ENCODE measurements at regions of chr1 and their contacts with region 1.

Region 1: GRCh38 chr1:201481761-201482493 is 12.9 kb upstream of the PHLDA3 start:
- DNase-seq: peak; percentile 41
- ATAC-seq: peak; percentile 90
- H3K4me3 ChIP-seq: no peak overlapping the region; the same call in 1 of the 2 replicates
- H3K27ac ChIP-seq: peak overlapping the region; percentile 78
- H3K4me1 ChIP-seq: peaks cover 41% of the 10 kb centered on the region
- H3K27me3 ChIP-seq: no peaks in the 10 kb centered on the region
- CTCF ChIP-seq: peak; percentile 91 to 97 (median 93)
- EP300 ChIP-seq: no peak
- POLR2A ChIP-seq: no peak
- RAD21 ChIP-seq: peak; percentile 90

Region 2: DNA sequence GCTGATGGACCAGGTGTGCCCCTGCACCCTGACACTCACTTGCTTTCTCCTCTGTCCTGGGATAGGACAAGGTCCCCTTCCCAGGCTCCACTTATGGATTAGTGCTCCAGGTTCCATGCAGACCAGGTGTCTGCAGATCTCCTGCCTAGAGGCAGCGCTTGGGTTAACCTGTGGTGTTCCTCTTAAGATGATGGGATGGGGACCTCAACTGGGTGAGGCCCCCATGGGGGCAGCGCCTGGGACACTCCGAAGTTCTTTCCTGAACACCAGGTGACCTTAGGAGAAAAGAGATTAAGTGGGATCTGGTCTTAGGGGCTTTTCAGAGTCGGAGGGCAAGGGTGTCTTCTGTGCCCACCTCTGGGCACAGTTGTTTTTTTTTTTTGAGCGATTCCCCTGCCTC is 125.7 kb before region 1 on chr1:
- CTCF ChIA-PET with region 1: no interaction called
- POLR2A ChIA-PET with region 1: no interaction called
- RAD21 ChIA-PET with region 1: no interaction called
- SMC1A ChIA-PET with region 1: no interaction called
- in situ Hi-C with region 1: no loop called
- intact Hi-C with region 1: no loop called
- DNase-seq: no peak
- ATAC-seq: no peak
- H3K4me3 ChIP-seq: no peak overlapping the region
- H3K27ac ChIP-seq: no peak overlapping the region
- H3K4me1 ChIP-seq: no peaks in the 10 kb centered on the region
- H3K27me3 ChIP-seq: peaks cover 0 to 4% of the 10 kb centered on the region in 2 experiments; a peak in 2 of 4 replicates
- CTCF ChIP-seq: no peak
- EP300 ChIP-seq: no peak
- POLR2A ChIP-seq: no peak
- RAD21 ChIP-seq: no peak

Region 3: DNA sequence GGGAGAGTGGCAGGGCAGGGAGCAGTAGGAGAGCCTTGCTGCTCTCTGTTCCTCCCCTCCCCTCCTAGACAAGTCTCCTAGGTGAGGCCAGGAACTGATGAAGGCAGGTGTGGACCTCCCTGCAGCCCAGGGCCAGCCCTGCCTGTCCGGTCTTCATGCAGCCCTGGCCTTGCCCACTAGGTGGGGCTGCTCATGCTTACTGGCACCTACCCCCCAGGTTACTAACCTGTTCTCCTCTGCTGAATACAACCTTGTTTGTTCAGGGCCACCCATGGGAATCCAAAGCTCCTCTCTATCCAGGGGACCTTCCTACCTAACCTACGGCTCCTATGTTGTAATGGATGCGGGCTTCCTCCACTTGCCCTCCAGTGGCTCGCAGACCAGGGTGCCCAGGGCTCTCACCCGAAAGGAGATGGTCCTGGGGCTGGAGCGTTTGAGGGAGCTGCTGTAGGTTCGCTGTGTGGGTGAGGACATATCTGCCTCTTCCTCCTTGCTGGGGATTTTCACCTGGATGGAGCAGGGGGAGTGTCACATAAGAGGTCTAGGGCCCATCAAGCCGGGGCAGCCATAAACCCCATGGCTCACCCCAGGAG is 96.5 kb before region 1 on chr1:
- CTCF ChIA-PET with region 1: interaction called, 22 read pairs
- POLR2A ChIA-PET with region 1: no interaction called
- RAD21 ChIA-PET with region 1: interaction called, 12 read pairs
- SMC1A ChIA-PET with region 1: interaction called, 8 read pairs
- in situ Hi-C with region 1: no loop called
- intact Hi-C with region 1: no loop called
- DNase-seq: no peak
- ATAC-seq: peak; percentile 99
- H3K4me3 ChIP-seq: no peak overlapping the region
- H3K27ac ChIP-seq: no peak overlapping the region
- H3K4me1 ChIP-seq: no peaks in the 10 kb centered on the region
- H3K27me3 ChIP-seq: no peaks in the 10 kb centered on the region; a peak in 1 of 4 replicates
- CTCF ChIP-seq: peak; percentile 93 to 97 (median 96); a peak in 5 of 6 replicates
- EP300 ChIP-seq: no peak
- POLR2A ChIP-seq: no peak
- RAD21 ChIP-seq: peak; percentile 78

Region 4: GRCh38 chr1:201426479-201427310 is 55.2 kb before region 1 on chr1:
- CTCF ChIA-PET with region 1: interaction called, 30 read pairs
- POLR2A ChIA-PET with region 1: no interaction called
- RAD21 ChIA-PET with region 1: interaction called, 3 read pairs
- SMC1A ChIA-PET with region 1: no interaction called
- in situ Hi-C with region 1: no loop called
- intact Hi-C with region 1: no loop called
- DNase-seq: no peak
- ATAC-seq: peak; percentile 69
- H3K4me3 ChIP-seq: no peak overlapping the region
- H3K27ac ChIP-seq: no peak overlapping the region
- H3K4me1 ChIP-seq: peaks cover 3% of the 10 kb centered on the region
- H3K27me3 ChIP-seq: no peaks in the 10 kb centered on the region
- CTCF ChIP-seq: no peak
- EP300 ChIP-seq: peak; percentile 13 to 30; a peak in 1 of 4 replicates
- POLR2A ChIP-seq: no peak
- RAD21 ChIP-seq: no peak

Region 5: GRCh38 chr1:201456499-201457309 is 25.2 kb before region 1 on chr1:
- CTCF ChIA-PET with region 1: interaction called, 455 read pairs
- POLR2A ChIA-PET with region 1: interaction called, 59 read pairs
- RAD21 ChIA-PET with region 1: interaction called, 301 read pairs
- SMC1A ChIA-PET with region 1: interaction called, 182 read pairs
- in situ Hi-C with region 1: no loop called
- intact Hi-C with region 1: no loop called
- DNase-seq: no peak
- ATAC-seq: peak; percentile 54
- H3K4me3 ChIP-seq: 0 out of 2 replicates have a peak overlapping the region, but pooled peaks have one; percentile 14
- H3K27ac ChIP-seq: no peak overlapping the region; the same call in 1 of the 2 replicates
- H3K4me1 ChIP-seq: peaks cover 31% of the 10 kb centered on the region
- H3K27me3 ChIP-seq: no peaks in the 10 kb centered on the region
- CTCF ChIP-seq: no peak
- EP300 ChIP-seq: no peak
- POLR2A ChIP-seq: no peak
- RAD21 ChIP-seq: no peak

Region 6: GRCh38 chr1:201506556-201507359 is 24.8 kb after region 1 on chr1 and contains the start of gene CSRP1:
- CTCF ChIA-PET with region 1: interaction called, 814 read pairs
- POLR2A ChIA-PET with region 1: interaction called, 68 read pairs
- RAD21 ChIA-PET with region 1: interaction called, 505 read pairs
- SMC1A ChIA-PET with region 1: interaction called, 514 read pairs
- in situ Hi-C with region 1: no loop called
- intact Hi-C with region 1: no loop called
- DNase-seq: peak; percentile 39
- ATAC-seq: peak; percentile 91
- H3K4me3 ChIP-seq: peak within 1 kb of the TSS; percentile 95
- H3K27ac ChIP-seq: peak within 1 kb of the TSS; percentile 83
- H3K4me1 ChIP-seq: peaks cover 37% of the 10 kb centered on the region
- H3K27me3 ChIP-seq: no peaks in the 10 kb centered on the region
- CTCF ChIP-seq: peak in 1 of 3 experiments; percentile 21; a peak in 1 of 6 replicates
- EP300 ChIP-seq: no peak
- POLR2A ChIP-seq: peak; percentile 96
- RAD21 ChIP-seq: no peak
- polyA plus RNA-seq, gene CSRP1: 23.4 to 24.3 TPM

Region 7: DNA sequence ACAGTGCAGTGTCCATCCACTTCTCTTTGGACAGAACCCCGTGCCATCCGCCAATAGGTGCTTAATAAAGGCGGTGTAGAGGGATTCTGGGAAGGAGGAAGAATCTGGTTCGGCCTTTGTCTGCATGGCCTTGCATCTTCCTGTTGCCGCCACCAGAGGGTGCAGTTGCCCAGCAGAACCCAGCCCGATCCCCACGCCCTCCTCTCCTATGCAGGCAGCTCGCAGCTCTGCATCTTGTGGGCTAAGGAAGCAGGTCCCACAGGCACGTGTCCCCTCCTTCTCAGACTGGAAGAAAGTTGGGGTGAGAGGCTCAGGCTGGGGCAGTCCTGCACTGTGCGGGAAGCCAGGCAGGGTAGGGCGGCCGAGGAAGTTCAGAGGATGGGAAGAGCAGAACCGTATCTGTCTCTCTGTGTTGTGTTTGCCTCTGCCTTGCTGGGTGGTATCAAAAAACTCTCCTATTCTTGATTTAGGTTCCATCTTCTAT is 77.8 kb after region 1 on chr1:
- CTCF ChIA-PET with region 1: interaction called, 26 read pairs
- POLR2A ChIA-PET with region 1: no interaction called
- RAD21 ChIA-PET with region 1: interaction called, 3 read pairs
- SMC1A ChIA-PET with region 1: no interaction called
- in situ Hi-C with region 1: no loop called
- intact Hi-C with region 1: no loop called
- DNase-seq: peak; percentile 9
- ATAC-seq: peak; percentile 99
- H3K4me3 ChIP-seq: no peak overlapping the region
- H3K27ac ChIP-seq: no peak overlapping the region
- H3K4me1 ChIP-seq: no peaks in the 10 kb centered on the region
- H3K27me3 ChIP-seq: peaks cover 0 to 1% of the 10 kb centered on the region in 2 experiments; a peak in 2 of 4 replicates
- CTCF ChIP-seq: peak; percentile 94 to 96 (median 96)
- EP300 ChIP-seq: no peak
- POLR2A ChIP-seq: no peak
- RAD21 ChIP-seq: peak; percentile 92

Region 8: DNA sequence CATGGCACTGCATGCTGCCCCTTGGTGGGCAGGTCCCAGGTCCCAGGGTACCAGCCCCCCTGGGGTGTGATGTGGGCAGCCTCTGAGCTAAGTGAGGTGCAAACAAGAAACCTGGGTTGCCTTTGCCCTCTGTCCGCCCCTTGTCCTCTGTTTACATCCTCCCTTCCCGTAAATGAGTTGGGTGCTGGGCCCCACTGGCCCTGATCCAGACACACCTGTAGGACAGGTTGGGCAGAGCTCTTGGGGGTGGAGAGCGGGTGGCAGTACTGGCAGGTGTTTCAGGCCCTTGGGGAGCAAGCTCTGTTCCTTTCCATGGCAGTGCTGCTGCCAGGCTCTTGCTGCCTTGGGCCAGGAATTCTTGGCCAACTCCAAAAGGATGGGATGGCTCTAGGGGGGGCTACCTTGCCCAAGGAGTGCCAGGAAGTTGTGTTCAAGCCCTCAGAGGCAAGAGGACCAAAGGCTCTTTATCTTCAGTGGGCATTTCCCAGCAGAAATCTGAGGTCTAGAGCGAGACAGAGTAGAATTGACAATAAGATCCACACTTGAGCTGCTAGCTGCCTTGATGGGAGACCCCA is 564.4 kb after region 1 on chr1:
- CTCF ChIA-PET with region 1: no interaction called
- POLR2A ChIA-PET with region 1: no interaction called
- RAD21 ChIA-PET with region 1: no interaction called
- SMC1A ChIA-PET with region 1: no interaction called
- in situ Hi-C with region 1: no loop called
- intact Hi-C with region 1: no loop called
- DNase-seq: no peak
- ATAC-seq: no peak
- H3K4me3 ChIP-seq: no peak overlapping the region
- H3K27ac ChIP-seq: no peak overlapping the region
- H3K4me1 ChIP-seq: no peaks in the 10 kb centered on the region
- H3K27me3 ChIP-seq: peaks cover 0 to 3% of the 10 kb centered on the region in 2 experiments; a peak in 1 of 4 replicates
- CTCF ChIP-seq: no peak
- EP300 ChIP-seq: no peak
- POLR2A ChIP-seq: no peak
- RAD21 ChIP-seq: no peak

Measured in GM12878 (cell line).